Colonic mucosa (tissue), 4 donors: ENCODE measurements at regions of chr14 and their contacts with region 1.

Region 1: GRCh38 chr14:20613094-20614037 is 22.2 kb upstream of the RNASE12 start:
- DNase-seq: peak; percentile 87
- H3K4me3 ChIP-seq: peak overlapping the region; percentile 41
- H3K27ac ChIP-seq: peak overlapping the region; percentile 75
- H3K4me1 ChIP-seq: no peaks in the 10 kb centered on the region
- H3K27me3 ChIP-seq: no peaks in the 10 kb centered on the region
- CTCF ChIP-seq: peak; percentile 43

Region 2: GRCh38 chr14:20327005-20327869 is 286.1 kb before region 1 on chr14:
- intact Hi-C with region 1: loop called (anchors 5 kb)
- DNase-seq: peak; percentile 33
- H3K4me3 ChIP-seq: no peak overlapping the region
- H3K27ac ChIP-seq: no peak overlapping the region
- H3K4me1 ChIP-seq: no peaks in the 10 kb centered on the region
- H3K27me3 ChIP-seq: no peaks in the 10 kb centered on the region
- CTCF ChIP-seq: peak; percentile 72

Region 3: GRCh38 chr14:20413045-20413799 is 200.1 kb before region 1 on chr14 and contains the start of gene TEP1:
- intact Hi-C with region 1: loop called (anchors 10 kb)
- DNase-seq: peak; percentile 95
- H3K4me3 ChIP-seq: peak within 1 kb of the TSS; percentile 62
- H3K27ac ChIP-seq: peak within 1 kb of the TSS; percentile 98
- H3K4me1 ChIP-seq: peaks cover 10% of the 10 kb centered on the region
- H3K27me3 ChIP-seq: no peaks in the 10 kb centered on the region
- CTCF ChIP-seq: no peak
- total RNA-seq, gene TEP1: 53.7 to 71.3 TPM

Region 4: GRCh38 chr14:20469890-20470602 is 143.3 kb before region 1 on chr14:
- intact Hi-C with region 1: loop called (anchors 10 kb)
- DNase-seq: peak; percentile 65
- H3K4me3 ChIP-seq: peak overlapping the region; percentile 93
- H3K27ac ChIP-seq: peak overlapping the region; percentile 99
- H3K4me1 ChIP-seq: peaks cover 3% of the 10 kb centered on the region
- H3K27me3 ChIP-seq: no peaks in the 10 kb centered on the region
- CTCF ChIP-seq: no peak

Region 5: GRCh38 chr14:20530771-20531571 is 82.4 kb before region 1 on chr14:
- intact Hi-C with region 1: loop called (anchors 2 kb)
- DNase-seq: peak; percentile 75
- H3K4me3 ChIP-seq: no peak overlapping the region
- H3K27ac ChIP-seq: no peak overlapping the region
- H3K4me1 ChIP-seq: no peaks in the 10 kb centered on the region
- H3K27me3 ChIP-seq: no peaks in the 10 kb centered on the region
- CTCF ChIP-seq: peak; percentile 63

Region 6: DNA sequence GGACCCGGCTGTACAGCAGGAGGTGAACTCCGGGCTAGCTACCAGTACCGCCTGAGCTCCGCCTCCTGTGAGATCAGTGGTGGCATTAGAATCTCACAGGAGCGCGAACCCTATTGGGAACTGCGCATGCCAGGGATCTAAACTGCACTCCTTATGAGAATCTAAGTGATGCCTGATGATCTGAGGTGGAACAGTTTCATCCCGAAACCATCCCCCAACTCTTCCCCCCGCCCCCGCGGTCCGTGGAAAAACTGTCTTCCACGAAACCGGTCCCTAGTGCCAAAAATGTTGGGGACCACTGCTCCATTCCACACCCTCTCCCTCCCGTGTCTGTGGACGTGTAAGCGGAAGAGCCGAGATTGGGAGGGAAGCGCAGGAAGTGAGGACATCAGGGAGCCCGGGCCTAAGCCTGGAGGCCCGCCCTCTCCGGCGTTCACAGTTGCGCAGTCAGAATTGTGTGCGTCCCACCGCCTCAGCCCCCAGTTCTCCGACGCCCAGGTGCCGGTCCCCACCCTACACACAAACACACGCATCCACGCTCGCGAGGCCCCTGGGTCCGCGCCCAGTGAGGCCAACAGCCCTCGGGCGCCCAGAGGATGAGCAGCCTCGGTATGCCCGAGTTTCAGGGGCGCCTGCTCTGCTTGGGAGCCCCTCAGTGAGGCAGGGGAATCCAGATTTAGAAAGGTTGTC is 69.2 kb after region 1 on chr14:
- intact Hi-C with region 1: loop called (anchors 2 kb)
- DNase-seq: peak; percentile 89
- H3K4me3 ChIP-seq: peak overlapping the region; percentile 53
- H3K27ac ChIP-seq: peak overlapping the region; percentile 100
- H3K4me1 ChIP-seq: peaks cover 7% of the 10 kb centered on the region
- H3K27me3 ChIP-seq: no peaks in the 10 kb centered on the region
- CTCF ChIP-seq: no peak